Common myeloid progenitor, CD34-positive (primary cell): ENCODE measurements at regions of chr17 and their contacts with region 1.

Region 1: GRCh38 chr17:47252209-47252608 is 1.4 kb upstream of the ITGB3 start:
- DNase-seq: no peak
- H3K4me3 ChIP-seq: no peak overlapping the region
- H3K27ac ChIP-seq: no peak overlapping the region
- H3K4me1 ChIP-seq: peaks cover 0 to 18% (median 16%) of the 10 kb centered on the region in 4 experiments
- H3K27me3 ChIP-seq: peaks cover 6 to 31% (median 13%) of the 10 kb centered on the region in 5 experiments

Region 2: DNA sequence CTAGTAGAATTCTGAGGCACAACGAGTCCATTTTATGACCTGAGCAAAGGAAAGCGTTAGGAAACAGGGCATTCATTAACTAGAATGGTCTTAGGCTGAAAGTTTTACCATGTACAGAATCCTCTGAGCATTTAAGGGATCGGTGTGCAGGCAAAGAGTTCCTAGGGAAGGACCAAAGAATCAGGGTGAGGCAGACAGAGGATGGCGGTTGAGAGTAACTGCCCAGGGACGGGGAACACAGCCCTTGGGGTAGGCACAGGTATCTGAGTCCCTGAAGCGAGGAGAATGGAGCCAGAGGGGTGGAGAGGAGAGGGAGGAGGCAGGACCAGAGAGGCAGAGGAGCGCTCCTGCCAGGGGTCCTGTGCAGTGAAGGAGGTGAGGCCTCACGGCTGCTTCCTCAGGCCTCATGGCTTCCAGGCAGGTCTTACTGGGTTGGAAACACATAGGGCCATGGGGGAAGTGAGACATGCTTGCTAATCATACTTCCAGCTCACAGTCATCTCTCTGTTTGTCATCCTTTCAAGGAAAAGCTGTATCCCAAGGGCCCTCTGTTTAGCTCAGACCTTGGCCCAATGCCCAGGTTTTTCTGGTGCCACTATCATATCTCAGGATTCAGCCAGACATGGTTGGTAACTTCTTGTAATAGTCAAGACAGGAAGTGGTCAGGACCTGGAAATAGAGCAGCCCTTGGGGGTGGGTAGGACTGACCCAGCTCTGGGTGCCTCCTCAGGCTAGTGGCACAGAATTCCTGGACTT is 12.4 kb before region 1 on chr17:
- CTCF ChIA-PET with region 1: interaction called, 19 read pairs
- POLR2A ChIA-PET with region 1: interaction called, 3 read pairs
- DNase-seq: peak; percentile 61 to 87 (median 85)
- H3K4me3 ChIP-seq: no peak overlapping the region
- H3K27ac ChIP-seq: no peak overlapping the region
- H3K4me1 ChIP-seq: peaks cover 0 to 29% (median 23%) of the 10 kb centered on the region in 4 experiments
- H3K27me3 ChIP-seq: no peaks in the 10 kb centered on the region